RWPE1 (cell line): ENCODE measurements at regions of chr2 and their contacts with region 1.

Region 1: DNA sequence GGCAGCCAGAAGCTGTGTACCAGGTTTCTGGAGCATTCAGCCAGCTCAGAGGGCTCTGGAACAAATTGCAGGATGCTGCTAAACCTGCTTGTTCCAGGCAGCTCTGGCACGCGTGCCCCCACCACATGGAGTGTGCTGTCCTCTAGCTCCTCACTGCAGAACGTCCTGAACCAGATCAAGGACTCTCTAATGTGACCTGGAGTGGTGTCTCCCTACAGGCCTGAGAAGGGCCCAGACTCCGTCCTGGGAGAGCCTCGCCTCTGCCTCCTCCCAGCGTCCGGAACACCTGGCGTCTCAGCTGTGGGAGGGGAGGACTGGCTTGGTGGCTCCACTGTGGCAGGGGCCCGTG is 115.6 kb upstream of the GPC1 start:
- DNase-seq: no peak
- H3K27ac ChIP-seq: peak overlapping the region; percentile 68
- CTCF ChIP-seq: no peak

Region 2: DNA sequence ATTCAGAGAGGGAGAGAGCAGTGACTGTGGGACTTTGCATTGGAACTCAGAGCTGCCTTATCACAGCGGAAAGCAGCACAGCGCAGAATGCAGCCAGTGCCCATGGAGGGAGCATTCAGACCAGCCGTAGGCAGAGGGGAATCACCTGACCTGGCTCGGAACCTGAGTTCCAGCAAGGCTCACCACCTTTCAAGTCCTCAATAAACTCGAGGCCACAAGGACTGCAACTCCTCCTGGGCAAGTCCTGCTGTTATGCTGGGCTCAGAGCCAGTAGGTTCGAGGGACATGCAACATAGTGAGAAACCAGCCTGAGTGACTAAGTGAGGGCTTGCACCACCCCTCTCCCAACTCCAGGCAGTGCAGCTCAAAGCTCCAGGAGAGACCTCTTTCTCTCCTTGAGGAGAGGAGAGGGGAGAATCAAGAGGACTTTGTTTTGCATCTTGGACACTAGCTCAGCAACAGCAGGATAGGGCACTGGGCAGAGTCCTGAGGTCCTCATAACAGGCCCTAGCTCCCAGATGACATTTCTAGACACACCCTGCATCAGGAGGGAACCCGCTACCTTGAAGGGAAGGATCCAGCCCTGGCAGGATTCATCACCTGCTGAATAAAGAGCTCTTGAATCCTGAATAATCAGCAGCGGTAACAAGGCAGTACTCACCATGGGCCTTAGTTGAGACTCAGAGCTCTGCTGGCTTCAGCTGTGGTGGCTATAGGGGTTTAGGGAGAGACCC is 42.6 kb before region 1 on chr2:
- CTCF ChIA-PET with region 1: no interaction called
- POLR2A ChIA-PET with region 1: no interaction called
- DNase-seq: no peak
- H3K27ac ChIP-seq: peak overlapping the region; percentile 21; the same call in 1 of the 2 replicates
- CTCF ChIP-seq: no peak

Region 3: GRCh38 chr2:240440704-240441320 is 121.0 kb after region 1 on chr2:
- CTCF ChIA-PET with region 1: interaction called, 10 read pairs
- POLR2A ChIA-PET with region 1: no interaction called
- DNase-seq: no peak
- H3K27ac ChIP-seq: peak overlapping the region; percentile 100
- CTCF ChIP-seq: no peak